ENCODE measurements at regions of chr6 and their contacts with region 1.

Region 1: GRCh38 chr6:3194535-3195419 is 32.7 kb downstream of the TUBB2B start:
- DNase-seq: no peak
- H3K4me3 ChIP-seq: no peak overlapping the region
- H3K27ac ChIP-seq: no peak overlapping the region
- H3K4me1 ChIP-seq: no peaks in the 10 kb centered on the region
- H3K27me3 ChIP-seq: no peaks in the 10 kb centered on the region
- CTCF ChIP-seq: no peak
- POLR2A ChIP-seq: no peak

Region 2: GRCh38 chr6:3269281-3269975 is 74.7 kb after region 1 on chr6:
- intact Hi-C with region 1: loop called (anchors 2 kb)
- DNase-seq: no peak
- H3K4me3 ChIP-seq: no peak overlapping the region
- H3K27ac ChIP-seq: no peak overlapping the region
- H3K4me1 ChIP-seq: no peaks in the 10 kb centered on the region
- H3K27me3 ChIP-seq: no peaks in the 10 kb centered on the region
- CTCF ChIP-seq: no peak
- POLR2A ChIP-seq: no peak

Region 3: DNA sequence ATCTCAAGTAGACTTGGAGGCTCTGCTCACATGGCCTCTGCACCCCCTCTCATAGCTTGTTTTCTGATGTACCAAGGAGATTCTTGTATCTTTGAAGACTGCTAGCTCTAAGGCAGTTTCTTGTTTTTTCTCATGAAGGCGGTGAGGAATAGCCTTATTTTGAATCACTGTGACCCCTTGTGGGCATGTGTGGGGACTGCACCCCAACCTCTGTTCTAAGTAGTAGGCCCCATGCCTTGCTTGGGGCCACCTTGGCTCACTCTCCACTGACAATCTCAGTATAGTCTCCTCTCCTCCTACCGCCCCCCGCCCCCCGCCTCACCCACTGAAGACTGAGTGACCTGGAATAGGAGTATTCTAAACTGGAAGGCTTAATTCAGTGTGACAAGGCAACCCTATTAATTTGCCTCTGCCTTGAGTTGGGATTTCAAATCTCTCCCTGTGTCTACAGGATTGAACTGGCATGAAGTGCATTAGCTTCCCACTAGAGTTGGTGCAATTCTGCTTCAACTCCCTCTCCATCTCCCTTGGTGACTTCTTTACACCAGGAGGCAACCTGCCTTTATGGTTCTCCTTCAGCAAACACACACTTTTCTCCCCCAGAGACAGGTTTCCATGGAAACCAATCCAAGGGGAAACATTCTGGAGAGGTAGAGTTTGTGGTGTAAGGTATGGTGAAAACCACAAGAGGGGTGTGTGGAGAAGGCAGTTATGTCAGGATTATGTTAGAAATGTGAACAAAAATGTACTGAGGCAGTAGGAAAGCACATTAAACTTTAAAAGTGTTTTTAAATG is 1016.0 kb after region 1 on chr6:
- intact Hi-C with region 1: loop called (anchors 5 kb)
- DNase-seq: peak; percentile 20 to 59
- H3K4me3 ChIP-seq: no peak overlapping the region
- H3K27ac ChIP-seq: no peak overlapping the region
- H3K4me1 ChIP-seq: no peaks in the 10 kb centered on the region
- H3K27me3 ChIP-seq: no peaks in the 10 kb centered on the region
- CTCF ChIP-seq: peak; percentile 35 to 59 (median 53)
- POLR2A ChIP-seq: no peak